CD4-positive, alpha-beta memory T cell (primary cell): ENCODE measurements at regions of chr17 and their contacts with region 1.

Region 1: GRCh38 chr17:63697341-63698286 is 2.3 kb downstream of the LIMD2 start:
- DNase-seq: peak; percentile 85 to 87 (median 86)
- H3K4me3 ChIP-seq: peak overlapping the region; percentile 90 to 98
- H3K4me3 Mint-ChIP-seq: peak overlapping the region; percentile 94 to 99 (median 98)
- H3K27ac ChIP-seq: peak overlapping the region; percentile 69
- H3K27ac Mint-ChIP-seq: peak overlapping the region; percentile 96 to 99 (median 98)
- H3K4me1 ChIP-seq: peaks cover 62% of the 10 kb centered on the region
- H3K4me1 Mint-ChIP-seq: peaks cover 21 to 73% (median 47%) of the 10 kb centered on the region in 4 donors
- H3K27me3 ChIP-seq: no peaks in the 10 kb centered on the region
- H3K27me3 Mint-ChIP-seq: no peaks in the 10 kb centered on the region

Region 2: GRCh38 chr17:63425482-63425881 is 272.1 kb before region 1 on chr17:
- CTCF ChIA-PET with region 1: interaction called, 6 read pairs
- POLR2A ChIA-PET with region 1: interaction called, 52 read pairs
- intact Hi-C with region 1: loop called (anchors 10 kb)
- DNase-seq: peak; percentile 68 to 74 (median 72)
- H3K4me3 ChIP-seq: no peak overlapping the region
- H3K4me3 Mint-ChIP-seq: peak overlapping the region; percentile 32 to 82 (median 48)
- H3K27ac ChIP-seq: no peak overlapping the region
- H3K27ac Mint-ChIP-seq: peak overlapping the region in 5 of 7 donors; percentile 47 to 87 (median 67)
- H3K4me1 ChIP-seq: peaks cover 49% of the 10 kb centered on the region
- H3K4me1 Mint-ChIP-seq: peaks cover 26 to 54% (median 44%) of the 10 kb centered on the region in 4 donors
- H3K27me3 ChIP-seq: no peaks in the 10 kb centered on the region
- H3K27me3 Mint-ChIP-seq: no peaks in the 10 kb centered on the region

Region 3: DNA sequence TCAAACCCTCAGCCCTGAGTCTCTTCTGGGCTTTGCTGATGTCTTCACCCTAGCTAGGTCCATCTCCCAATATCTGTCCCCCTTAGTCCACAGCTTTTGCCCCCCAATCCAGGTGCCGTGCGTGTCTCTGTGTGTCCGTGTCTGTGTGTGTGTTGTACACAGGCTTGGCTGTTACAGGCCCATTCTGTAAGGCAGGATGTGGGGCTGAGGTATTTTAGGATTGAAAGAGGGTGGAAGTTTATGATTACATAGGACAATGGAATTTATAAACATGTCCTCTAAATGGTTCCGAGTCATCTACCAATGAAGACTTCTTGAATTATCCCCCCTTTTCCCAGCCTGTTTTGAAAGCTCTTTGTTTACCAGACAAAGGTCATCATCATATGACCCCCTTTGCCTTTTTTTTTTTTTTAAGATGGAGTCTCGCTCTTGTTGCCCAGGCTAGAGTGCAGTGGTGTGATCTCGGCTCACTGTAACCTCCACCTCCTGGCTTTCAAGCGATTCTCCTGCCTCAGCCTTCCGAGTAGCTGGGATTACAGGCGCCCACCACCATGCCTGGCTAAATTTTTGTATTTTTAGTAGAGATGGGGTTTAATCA is 198.9 kb before region 1 on chr17:
- CTCF ChIA-PET with region 1: no interaction called
- POLR2A ChIA-PET with region 1: no interaction called
- intact Hi-C with region 1: no loop called
- DNase-seq: no peak
- H3K4me3 ChIP-seq: no peak overlapping the region
- H3K4me3 Mint-ChIP-seq: no peak overlapping the region
- H3K27ac ChIP-seq: no peak overlapping the region
- H3K27ac Mint-ChIP-seq: peak overlapping the region in 1 of 7 donors; percentile 5
- H3K4me1 ChIP-seq: no peaks in the 10 kb centered on the region
- H3K4me1 Mint-ChIP-seq: peaks cover 0 to 2% (median 0%) of the 10 kb centered on the region in 4 donors
- H3K27me3 ChIP-seq: no peaks in the 10 kb centered on the region
- H3K27me3 Mint-ChIP-seq: peaks cover 3 to 5% of the 10 kb centered on the region in 2 donors

Region 4: DNA sequence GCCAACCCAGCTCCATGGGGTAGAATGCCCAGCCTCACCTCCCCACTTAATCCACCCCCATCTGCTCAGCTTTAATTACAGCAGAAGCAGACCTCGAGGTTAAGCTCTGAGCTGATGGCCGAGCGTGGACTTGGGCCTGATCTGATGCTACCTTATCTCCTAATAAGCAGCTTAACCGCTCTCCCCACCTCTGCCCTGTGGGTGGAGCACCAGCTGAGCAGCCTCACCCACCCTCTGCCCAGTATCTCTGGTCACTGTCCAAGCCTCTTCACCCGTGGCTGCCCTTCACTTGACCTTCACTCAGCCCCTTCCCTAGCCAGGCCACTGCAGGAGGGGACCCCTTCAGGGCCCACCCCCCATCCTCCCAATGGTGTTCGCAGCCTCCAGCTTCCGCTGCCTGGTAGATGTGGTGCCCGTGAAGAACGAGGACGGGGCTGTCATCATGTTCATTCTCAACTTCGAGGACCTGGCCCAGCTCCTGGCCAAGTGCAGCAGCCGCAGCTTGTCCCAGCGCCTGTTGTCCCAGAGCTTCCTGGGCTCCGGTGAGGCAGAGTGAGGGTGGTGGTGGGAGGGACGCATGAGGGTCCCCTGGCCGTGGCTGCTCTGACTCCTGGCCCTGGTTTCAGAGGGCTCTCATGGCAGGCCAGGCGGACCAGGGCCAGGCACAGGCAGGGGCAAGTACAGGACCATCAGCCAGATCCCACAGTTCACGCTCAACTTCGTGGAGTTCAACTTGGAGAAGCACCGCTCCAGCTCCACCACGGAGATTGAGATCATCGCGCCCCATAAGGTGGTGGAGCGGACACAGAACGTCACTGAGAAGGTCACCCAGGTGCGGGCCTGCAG is 167.7 kb before region 1 on chr17:
- CTCF ChIA-PET with region 1: no interaction called
- POLR2A ChIA-PET with region 1: no interaction called
- intact Hi-C with region 1: no loop called
- DNase-seq: no peak
- H3K4me3 ChIP-seq: no peak overlapping the region
- H3K4me3 Mint-ChIP-seq: no peak overlapping the region
- H3K27ac ChIP-seq: no peak overlapping the region
- H3K27ac Mint-ChIP-seq: peak overlapping the region in 1 of 7 donors; percentile 41
- H3K4me1 ChIP-seq: no peaks in the 10 kb centered on the region
- H3K4me1 Mint-ChIP-seq: no peaks in the 10 kb centered on the region
- H3K27me3 ChIP-seq: no peaks in the 10 kb centered on the region
- H3K27me3 Mint-ChIP-seq: peaks cover 0 to 1% of the 10 kb centered on the region in 2 donors

Region 5: DNA sequence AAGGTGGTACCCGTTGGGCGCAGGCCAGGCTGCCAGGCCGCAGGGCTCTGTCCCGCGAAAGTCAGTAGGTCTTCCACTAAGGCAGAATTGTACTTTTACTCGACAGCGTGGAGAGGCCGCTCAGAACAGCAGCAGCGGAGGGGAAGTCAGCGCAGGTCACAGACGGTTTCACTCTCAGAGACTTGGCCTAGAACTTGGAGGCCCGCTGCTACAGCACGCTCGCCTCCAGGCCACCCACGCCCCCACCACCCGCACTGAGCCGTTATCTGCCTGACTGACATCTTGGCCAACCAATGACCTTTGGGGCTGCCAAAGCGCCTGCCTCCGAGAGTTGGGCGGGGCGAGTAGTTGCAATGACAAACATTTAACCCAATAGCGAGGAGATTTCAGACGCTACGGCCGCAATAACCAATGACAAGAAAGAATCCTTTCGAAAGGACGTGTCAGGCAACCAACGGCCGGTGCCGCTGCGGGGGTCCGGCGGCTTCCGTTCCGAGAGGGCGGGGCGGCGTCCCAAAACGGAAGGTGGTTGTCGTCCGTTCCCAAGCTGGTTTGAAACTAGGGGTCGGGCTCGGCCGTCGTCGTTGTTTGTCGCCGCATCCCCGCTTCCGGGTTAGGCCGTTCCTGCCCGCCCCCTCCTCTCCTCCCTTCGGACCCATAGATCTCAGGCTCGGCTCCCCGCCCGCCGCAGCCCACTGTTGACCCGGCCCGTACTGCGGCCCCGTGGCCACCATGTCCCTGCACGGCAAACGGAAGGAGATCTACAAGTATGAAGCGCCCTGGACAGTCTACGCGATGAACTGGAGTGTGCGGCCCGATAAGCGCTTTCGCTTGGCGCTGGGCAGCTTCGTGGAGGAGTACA is 147.4 kb before region 1 on chr17 and contains the start of gene DCAF7:
- CTCF ChIA-PET with region 1: no interaction called
- POLR2A ChIA-PET with region 1: interaction called, 9 read pairs
- intact Hi-C with region 1: loop called (anchors 5 kb)
- DNase-seq: peak; percentile 99 to 100 (median 99)
- H3K4me3 ChIP-seq: peak within 1 kb of the TSS; percentile 90 to 91
- H3K4me3 Mint-ChIP-seq: peak within 1 kb of the TSS; percentile 92 to 99 (median 97)
- H3K27ac ChIP-seq: peak within 1 kb of the TSS; percentile 91
- H3K27ac Mint-ChIP-seq: peak within 1 kb of the TSS; percentile 90 to 98 (median 97)
- H3K4me1 ChIP-seq: peaks cover 41% of the 10 kb centered on the region
- H3K4me1 Mint-ChIP-seq: peaks cover 26 to 51% (median 36%) of the 10 kb centered on the region in 4 donors
- H3K27me3 ChIP-seq: no peaks in the 10 kb centered on the region
- H3K27me3 Mint-ChIP-seq: no peaks in the 10 kb centered on the region
- total RNA-seq, gene DCAF7: 88.1 to 93.0 TPM

Region 6: GRCh38 chr17:63675607-63676413 is 21.8 kb before region 1 on chr17:
- CTCF ChIA-PET with region 1: interaction called, 3 read pairs
- POLR2A ChIA-PET with region 1: interaction called, 117 read pairs
- intact Hi-C with region 1: no loop called
- DNase-seq: no peak
- H3K4me3 ChIP-seq: no peak overlapping the region
- H3K4me3 Mint-ChIP-seq: no peak overlapping the region
- H3K27ac ChIP-seq: no peak overlapping the region
- H3K27ac Mint-ChIP-seq: peak overlapping the region in 6 of 7 donors; percentile 17 to 84 (median 60)
- H3K4me1 ChIP-seq: peaks cover 10% of the 10 kb centered on the region
- H3K4me1 Mint-ChIP-seq: peaks cover 10 to 24% (median 16%) of the 10 kb centered on the region in 4 donors
- H3K27me3 ChIP-seq: no peaks in the 10 kb centered on the region
- H3K27me3 Mint-ChIP-seq: no peaks in the 10 kb centered on the region

Region 7: GRCh38 chr17:63741221-63742049 is 43.8 kb after region 1 on chr17 and contains the start of gene STRADA:
- CTCF ChIA-PET with region 1: interaction called, 16 read pairs
- POLR2A ChIA-PET with region 1: interaction called, 364 read pairs
- intact Hi-C with region 1: loop called (anchors 1 kb)
- DNase-seq: peak; percentile 97 to 99 (median 99)
- H3K4me3 ChIP-seq: peak within 1 kb of the TSS; percentile 78 to 81
- H3K4me3 Mint-ChIP-seq: peak within 1 kb of the TSS; percentile 87 to 96 (median 92)
- H3K27ac ChIP-seq: peak within 1 kb of the TSS; percentile 88
- H3K27ac Mint-ChIP-seq: peak within 1 kb of the TSS; percentile 88 to 98 (median 97)
- H3K4me1 ChIP-seq: peaks cover 14% of the 10 kb centered on the region
- H3K4me1 Mint-ChIP-seq: peaks cover 14 to 32% (median 24%) of the 10 kb centered on the region in 4 donors
- H3K27me3 ChIP-seq: no peaks in the 10 kb centered on the region
- H3K27me3 Mint-ChIP-seq: no peaks in the 10 kb centered on the region
- total RNA-seq, gene STRADA: 55.6 to 58.3 TPM

Region 8: DNA sequence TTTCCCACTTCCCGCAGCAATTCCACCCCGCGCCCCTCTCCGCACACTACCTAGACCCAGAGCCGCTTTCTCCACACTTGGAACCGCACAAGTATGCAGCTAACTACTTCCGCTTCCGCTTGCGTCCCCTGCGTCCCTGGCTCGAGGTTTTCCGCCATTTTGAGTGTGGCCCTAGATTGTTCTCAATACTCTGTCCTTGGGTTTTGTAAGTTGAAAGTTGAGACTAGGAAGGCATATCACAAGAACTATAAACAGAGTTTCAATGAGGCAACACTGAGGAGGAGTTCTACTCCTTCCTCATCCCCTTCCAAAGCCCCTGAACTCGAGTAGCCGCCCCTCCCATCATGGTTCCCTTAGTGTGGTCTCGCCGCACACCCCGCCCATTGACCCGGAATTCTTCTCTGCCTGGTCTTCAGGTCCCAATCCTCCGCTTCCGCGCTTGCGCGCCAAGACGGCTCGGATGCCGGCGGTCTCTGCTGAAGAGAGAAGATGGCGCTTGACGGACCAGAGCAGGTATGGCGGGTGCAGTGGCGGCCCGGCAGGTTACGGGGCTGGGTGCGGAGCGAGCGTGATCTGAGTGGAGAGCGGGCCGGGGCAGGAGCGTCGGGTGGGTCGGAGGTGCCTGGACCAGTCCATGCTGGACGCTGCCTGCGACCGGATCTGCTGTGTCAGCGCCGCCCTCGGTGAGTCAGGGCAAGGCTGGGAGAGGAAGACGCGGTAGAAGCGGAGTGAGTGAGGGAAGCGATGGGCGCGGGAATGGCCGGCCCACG is 129.6 kb after region 1 on chr17 and contains the starts of genes FTSJ3 and PSMC5:
- CTCF ChIA-PET with region 1: interaction called, 3 read pairs
- POLR2A ChIA-PET with region 1: interaction called, 129 read pairs
- intact Hi-C with region 1: loop called (anchors 1 kb)
- DNase-seq: peak; percentile 96 to 98 (median 97)
- H3K4me3 ChIP-seq: peak within 1 kb of the TSS; percentile 93
- H3K4me3 Mint-ChIP-seq: peak within 1 kb of the TSS; percentile 93 to 100 (median 98)
- H3K27ac ChIP-seq: peak within 1 kb of the TSS; percentile 90
- H3K27ac Mint-ChIP-seq: peak within 1 kb of the TSS; percentile 95 to 100 (median 100)
- H3K4me1 ChIP-seq: peaks cover 61% of the 10 kb centered on the region
- H3K4me1 Mint-ChIP-seq: peaks cover 46 to 92% (median 74%) of the 10 kb centered on the region in 4 donors
- H3K27me3 ChIP-seq: no peaks in the 10 kb centered on the region
- H3K27me3 Mint-ChIP-seq: no peaks in the 10 kb centered on the region
- total RNA-seq, gene FTSJ3: 62.1 to 62.2 TPM
- total RNA-seq, gene PSMC5: 121 TPM

Region 9: GRCh38 chr17:63848834-63849700 is 151.5 kb after region 1 on chr17:
- CTCF ChIA-PET with region 1: interaction called, 8 read pairs
- POLR2A ChIA-PET with region 1: interaction called, 56 read pairs
- intact Hi-C with region 1: no loop called
- DNase-seq: peak; percentile 92 to 94 (median 93)
- H3K4me3 ChIP-seq: peak overlapping the region; percentile 45 to 58
- H3K4me3 Mint-ChIP-seq: peak overlapping the region; percentile 78 to 94 (median 89)
- H3K27ac ChIP-seq: peak overlapping the region; percentile 18
- H3K27ac Mint-ChIP-seq: peak overlapping the region; percentile 72 to 100 (median 98)
- H3K4me1 ChIP-seq: peaks cover 13% of the 10 kb centered on the region
- H3K4me1 Mint-ChIP-seq: peaks cover 13 to 22% (median 18%) of the 10 kb centered on the region in 4 donors
- H3K27me3 ChIP-seq: no peaks in the 10 kb centered on the region
- H3K27me3 Mint-ChIP-seq: no peaks in the 10 kb centered on the region

Region 10: DNA sequence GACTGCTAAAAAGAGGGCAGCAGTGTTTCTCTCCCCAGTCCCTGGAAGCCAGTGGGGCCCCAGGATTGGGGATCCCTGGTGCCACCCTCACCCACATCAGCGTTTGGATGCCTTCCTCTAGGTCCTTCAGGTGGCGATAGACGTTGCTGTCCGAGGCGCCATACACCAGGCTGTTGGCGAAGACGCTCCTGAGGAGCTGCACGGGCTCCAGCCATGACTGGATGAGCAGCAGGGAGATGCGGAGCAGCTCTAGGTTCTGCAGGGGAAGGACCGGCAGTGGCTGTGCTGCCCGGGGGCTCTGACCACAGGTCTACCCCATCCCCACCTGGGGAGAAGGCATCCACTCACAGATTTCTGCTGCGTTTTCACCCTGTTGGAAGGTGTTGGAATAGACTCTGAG is 183.1 kb after region 1 on chr17:
- CTCF ChIA-PET with region 1: no interaction called
- POLR2A ChIA-PET with region 1: no interaction called
- intact Hi-C with region 1: no loop called
- DNase-seq: no peak
- H3K4me3 ChIP-seq: no peak overlapping the region
- H3K4me3 Mint-ChIP-seq: no peak overlapping the region
- H3K27ac ChIP-seq: no peak overlapping the region
- H3K27ac Mint-ChIP-seq: no peak overlapping the region
- H3K4me1 ChIP-seq: no peaks in the 10 kb centered on the region
- H3K4me1 Mint-ChIP-seq: peaks cover 0 to 3% (median 0%) of the 10 kb centered on the region in 4 donors
- H3K27me3 ChIP-seq: no peaks in the 10 kb centered on the region
- H3K27me3 Mint-ChIP-seq: peaks cover 0 to 3% of the 10 kb centered on the region in 2 donors

Region 11: DNA sequence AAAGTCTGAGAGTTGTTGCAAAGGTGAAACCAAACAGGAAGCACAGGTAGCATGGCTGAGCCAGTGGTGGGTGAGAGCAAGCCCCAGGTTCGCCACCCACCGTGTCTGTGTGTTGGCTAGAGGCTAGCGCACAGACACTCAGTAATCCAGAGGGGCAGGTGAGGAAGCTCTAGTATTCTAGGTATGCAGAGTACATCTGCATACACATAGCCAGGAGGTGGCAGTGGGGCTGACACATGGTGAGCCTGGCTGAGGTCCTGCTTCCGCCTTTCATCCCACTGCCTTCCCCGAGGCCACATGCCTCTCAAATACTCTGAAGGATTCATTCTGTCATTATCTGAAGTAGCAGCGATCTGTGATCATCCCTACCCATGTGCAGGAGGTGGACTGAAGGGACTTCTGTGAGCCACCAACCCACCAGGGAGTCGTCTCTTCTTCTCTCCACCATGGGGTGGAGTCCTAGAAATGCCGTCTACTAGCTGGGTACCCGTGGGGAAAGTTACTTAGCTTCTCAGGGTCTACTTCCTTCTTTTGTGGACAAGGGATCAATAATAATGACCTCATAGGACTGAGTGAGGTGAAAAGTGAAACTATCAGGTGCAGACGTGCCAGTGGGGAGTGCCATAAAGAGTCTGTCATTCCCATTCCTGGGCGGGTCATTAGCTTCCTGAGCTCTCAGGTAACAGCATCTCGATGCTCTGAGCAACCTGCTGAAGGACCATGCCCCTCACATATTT is 358.8 kb after region 1 on chr17:
- CTCF ChIA-PET with region 1: no interaction called
- POLR2A ChIA-PET with region 1: no interaction called
- intact Hi-C with region 1: no loop called
- DNase-seq: peak in 1 of 5 donors; percentile 40
- H3K4me3 ChIP-seq: no peak overlapping the region
- H3K4me3 Mint-ChIP-seq: peak overlapping the region in 6 of 8 donors; percentile 26 to 69 (median 60)
- H3K27ac ChIP-seq: peak overlapping the region; percentile 14
- H3K27ac Mint-ChIP-seq: peak overlapping the region; percentile 42 to 93 (median 91)
- H3K4me1 ChIP-seq: peaks cover 62% of the 10 kb centered on the region
- H3K4me1 Mint-ChIP-seq: peaks cover 39 to 94% (median 65%) of the 10 kb centered on the region in 4 donors
- H3K27me3 ChIP-seq: no peaks in the 10 kb centered on the region
- H3K27me3 Mint-ChIP-seq: no peaks in the 10 kb centered on the region